ENCODE measurements at regions of chr7 and their contacts with region 1.

Region 1: DNA sequence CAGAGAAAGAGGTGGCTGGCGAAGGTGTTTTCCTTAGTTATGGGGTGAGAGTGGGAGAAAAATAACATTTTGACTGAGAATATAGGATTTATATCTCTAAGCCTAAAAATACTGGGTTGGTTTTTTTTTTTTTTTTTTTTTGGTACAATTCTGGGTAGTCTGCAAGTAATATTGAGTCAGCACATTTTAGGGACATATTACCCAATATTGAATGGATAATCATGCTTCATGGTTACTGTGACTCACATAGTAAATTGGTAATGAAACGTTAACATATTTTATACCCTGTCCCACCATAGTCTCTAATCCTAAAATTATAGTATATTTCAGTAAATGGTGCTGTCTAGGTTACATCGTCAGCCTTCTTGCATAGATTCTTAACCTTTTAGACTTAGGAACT is 91.4 kb downstream of the TPST1 start:
- DNase-seq: no peak
- ATAC-seq: no peak
- H3K4me3 ChIP-seq: no peak overlapping the region
- H3K27ac ChIP-seq: no peak overlapping the region
- H3K4me1 ChIP-seq: no peaks in the 10 kb centered on the region
- H3K27me3 ChIP-seq: no peaks in the 10 kb centered on the region
- CTCF ChIP-seq: no peak

Region 2: GRCh38 chr7:66181845-66182244 is 114.7 kb before region 1 on chr7:
- CTCF ChIA-PET with region 1: interaction called, 12 read pairs
- POLR2A ChIA-PET with region 1: no interaction called
- in situ Hi-C with region 1: no loop called
- intact Hi-C with region 1: no loop called
- DNase-seq: no peak
- ATAC-seq: 0 out of 2 replicates have a peak, but pooled peaks have one; percentile 37
- H3K4me3 ChIP-seq: no peak overlapping the region
- H3K27ac ChIP-seq: no peak overlapping the region
- H3K4me1 ChIP-seq: no peaks in the 10 kb centered on the region
- H3K27me3 ChIP-seq: no peaks in the 10 kb centered on the region
- CTCF ChIP-seq: no peak

Region 3: DNA sequence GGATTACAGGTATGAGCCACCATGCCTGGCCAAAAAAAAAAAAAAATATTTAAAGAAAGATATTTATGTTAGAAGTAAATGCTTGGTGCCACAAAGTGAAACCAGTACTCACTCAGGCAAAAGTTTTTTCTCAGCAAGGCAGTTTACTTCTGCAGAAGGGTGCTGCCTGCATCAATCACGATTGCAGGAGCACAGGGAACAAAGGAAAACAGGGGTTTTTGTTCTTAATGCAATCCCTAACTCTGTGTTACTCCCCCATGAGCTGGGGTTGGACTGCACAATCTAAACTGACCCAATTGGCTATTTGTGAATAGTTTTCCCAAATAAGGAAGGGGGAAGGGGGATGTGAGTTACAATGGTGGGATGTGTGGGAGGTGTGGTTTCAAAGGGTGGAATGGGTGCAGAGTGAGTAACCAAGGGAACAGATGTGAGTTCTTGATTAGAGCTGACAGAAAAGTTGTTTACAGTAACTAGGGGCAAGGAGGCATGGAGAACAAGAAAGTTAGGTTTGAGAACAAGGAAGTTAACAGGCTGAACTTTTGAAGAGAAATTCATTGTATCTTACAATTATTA is 955.5 kb after region 1 on chr7:
- CTCF ChIA-PET with region 1: no interaction called
- POLR2A ChIA-PET with region 1: interaction called, 15 read pairs
- in situ Hi-C with region 1: no loop called
- intact Hi-C with region 1: no loop called
- DNase-seq: no peak
- ATAC-seq: no peak
- H3K4me3 ChIP-seq: no peak overlapping the region
- H3K27ac ChIP-seq: no peak overlapping the region
- H3K4me1 ChIP-seq: no peaks in the 10 kb centered on the region
- H3K27me3 ChIP-seq: no peaks in the 10 kb centered on the region
- CTCF ChIP-seq: no peak

Measured in Panc1 (cell line).